ENCODE measurements at regions of chrX and their contacts with region 1.

Region 1: GRCh38 chrX:16722481-16722880 is 3.1 kb downstream of the SYAP1 start:
- DNase-seq: no peak
- ATAC-seq: no peak
- H3K4me3 ChIP-seq: no peak overlapping the region
- H3K27ac ChIP-seq: no peak overlapping the region
- H3K4me1 ChIP-seq: no peaks in the 10 kb centered on the region
- H3K27me3 ChIP-seq: no peaks in the 10 kb centered on the region
- CTCF ChIP-seq: no peak

Region 2: GRCh38 chrX:16822723-16823122 is 100.2 kb after region 1 on chrX:
- CTCF ChIA-PET with region 1: no interaction called
- POLR2A ChIA-PET with region 1: interaction called, 12 read pairs
- in situ Hi-C with region 1: no loop called
- intact Hi-C with region 1: no loop called
- DNase-seq: no peak
- ATAC-seq: no peak
- H3K4me3 ChIP-seq: no peak overlapping the region
- H3K27ac ChIP-seq: no peak overlapping the region
- H3K4me1 ChIP-seq: no peaks in the 10 kb centered on the region
- H3K27me3 ChIP-seq: no peaks in the 10 kb centered on the region
- CTCF ChIP-seq: no peak

Measured in Panc1 (cell line).